Calu3 (cell line): ENCODE measurements at regions of chr4 and their contacts with region 1.

Region 1: GRCh38 chr4:164977243-164978164 is at the start of gene TRIM61:
- DNase-seq: no peak
- H3K4me3 Mint-ChIP-seq: no peak within 1 kb of the TSS
- H3K27ac Mint-ChIP-seq: no peak within 1 kb of the TSS
- H3K4me1 Mint-ChIP-seq: no peaks in the 10 kb centered on the region
- H3K27me3 Mint-ChIP-seq: no peaks in the 10 kb centered on the region
- CTCF ChIP-seq: no peak
- total RNA-seq, gene TRIM61: 0.39 and 0.45 TPM in 2 replicates

Region 2: GRCh38 chr4:164648849-164649212 is 328.7 kb before region 1 on chr4:
- CTCF ChIA-PET with region 1: interaction called, 11 read pairs
- intact Hi-C with region 1: no loop called
- DNase-seq: no peak
- H3K4me3 Mint-ChIP-seq: no peak overlapping the region
- H3K27ac Mint-ChIP-seq: no peak overlapping the region
- H3K4me1 Mint-ChIP-seq: no peaks in the 10 kb centered on the region
- H3K27me3 Mint-ChIP-seq: no peaks in the 10 kb centered on the region
- CTCF ChIP-seq: no peak